ENCODE measurements at regions of chr1 and their contacts with region 1.

Region 1: GRCh38 chr1:67575861-67576260 is 109.1 kb upstream of the GADD45A start:
- DNase-seq: peak; percentile 93
- ATAC-seq: peak; percentile 80
- H3K4me3 ChIP-seq: no peak overlapping the region
- H3K27ac ChIP-seq: peak overlapping the region; percentile 36; the same call in 1 of the 2 replicates
- H3K4me1 ChIP-seq: peaks cover 14% of the 10 kb centered on the region
- H3K27me3 ChIP-seq: no peaks in the 10 kb centered on the region
- CTCF ChIP-seq: no peak
- POLR2A ChIP-seq: no peak
- RAD21 ChIP-seq: no peak

Region 2: GRCh38 chr1:66490816-66491215 is 1085.0 kb before region 1 on chr1:
- CTCF ChIA-PET with region 1: no interaction called
- POLR2A ChIA-PET with region 1: no interaction called
- dilution Hi-C with region 1: no loop called
- in situ Hi-C with region 1: no loop called
- intact Hi-C with region 1: no loop called
- DNase-seq: peak; percentile 63
- ATAC-seq: peak; percentile 69
- H3K4me3 ChIP-seq: no peak overlapping the region
- H3K27ac ChIP-seq: no peak overlapping the region
- H3K4me1 ChIP-seq: peaks cover 13% of the 10 kb centered on the region; the same call in 1 of the 2 replicates
- H3K27me3 ChIP-seq: no peaks in the 10 kb centered on the region
- CTCF ChIP-seq: no peak
- POLR2A ChIP-seq: no peak
- RAD21 ChIP-seq: no peak

Region 3: DNA sequence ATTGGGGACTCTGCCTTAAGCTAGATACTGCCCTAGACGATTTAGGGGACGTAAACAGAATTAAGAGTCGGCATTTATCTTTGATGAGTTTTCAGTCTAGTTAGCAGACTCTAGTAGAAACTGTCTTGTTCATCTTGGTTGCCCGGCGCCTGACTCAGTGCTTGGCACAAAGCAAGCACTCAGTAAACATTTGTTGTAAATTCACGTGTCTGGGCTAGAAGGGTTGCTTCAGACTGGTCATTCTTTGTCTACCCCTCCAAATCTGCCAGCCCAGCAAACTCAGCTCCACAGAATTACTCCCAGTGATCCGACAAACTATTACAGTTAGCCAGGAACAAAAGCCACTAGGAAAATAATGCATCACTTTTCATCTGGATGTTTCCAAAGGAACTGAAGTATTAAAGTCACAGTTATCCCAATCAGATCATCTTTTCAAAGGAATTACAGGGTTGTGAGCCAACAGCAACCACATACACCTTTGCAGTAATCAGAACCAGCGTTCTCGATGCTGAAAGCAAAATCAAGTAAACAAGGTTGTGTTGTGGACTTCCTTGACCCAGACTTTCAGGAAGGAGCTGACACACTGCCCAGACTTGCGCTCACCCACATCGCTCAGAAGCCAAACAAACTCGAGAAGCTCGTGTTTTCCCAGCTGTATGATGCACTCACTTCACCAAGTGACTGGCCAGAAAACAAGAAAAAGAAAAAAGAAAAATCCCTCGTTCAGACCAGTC is 42.6 kb after region 1 on chr1:
- CTCF ChIA-PET with region 1: interaction called, 3 read pairs
- POLR2A ChIA-PET with region 1: no interaction called
- dilution Hi-C with region 1: no loop called
- in situ Hi-C with region 1: no loop called
- intact Hi-C with region 1: loop called (anchors 5 kb)
- DNase-seq: peak; percentile 95
- ATAC-seq: peak; percentile 98
- H3K4me3 ChIP-seq: peak overlapping the region; percentile 9; the same call in 1 of the 2 replicates
- H3K27ac ChIP-seq: peak overlapping the region; percentile 13; the same call in 1 of the 2 replicates
- H3K4me1 ChIP-seq: peaks cover 6% of the 10 kb centered on the region
- H3K27me3 ChIP-seq: no peaks in the 10 kb centered on the region
- CTCF ChIP-seq: no peak
- POLR2A ChIP-seq: no peak
- RAD21 ChIP-seq: no peak

Region 4: GRCh38 chr1:67642629-67643028 is 66.8 kb after region 1 on chr1:
- CTCF ChIA-PET with region 1: no interaction called
- POLR2A ChIA-PET with region 1: no interaction called
- dilution Hi-C with region 1: no loop called
- in situ Hi-C with region 1: no loop called
- intact Hi-C with region 1: no loop called
- DNase-seq: no peak
- ATAC-seq: no peak
- H3K4me3 ChIP-seq: no peak overlapping the region
- H3K27ac ChIP-seq: no peak overlapping the region
- H3K4me1 ChIP-seq: peaks cover 10% of the 10 kb centered on the region; the same call in 1 of the 2 replicates
- H3K27me3 ChIP-seq: no peaks in the 10 kb centered on the region
- CTCF ChIP-seq: no peak
- POLR2A ChIP-seq: no peak
- RAD21 ChIP-seq: no peak